Posterior vena cava (tissue), 2 donors: ENCODE measurements at regions of chr9 and their contacts with region 1.

Region 1: GRCh38 chr9:91298311-91298710 is 63.4 kb downstream of the AUH start:
- DNase-seq: no peak

Region 2: DNA sequence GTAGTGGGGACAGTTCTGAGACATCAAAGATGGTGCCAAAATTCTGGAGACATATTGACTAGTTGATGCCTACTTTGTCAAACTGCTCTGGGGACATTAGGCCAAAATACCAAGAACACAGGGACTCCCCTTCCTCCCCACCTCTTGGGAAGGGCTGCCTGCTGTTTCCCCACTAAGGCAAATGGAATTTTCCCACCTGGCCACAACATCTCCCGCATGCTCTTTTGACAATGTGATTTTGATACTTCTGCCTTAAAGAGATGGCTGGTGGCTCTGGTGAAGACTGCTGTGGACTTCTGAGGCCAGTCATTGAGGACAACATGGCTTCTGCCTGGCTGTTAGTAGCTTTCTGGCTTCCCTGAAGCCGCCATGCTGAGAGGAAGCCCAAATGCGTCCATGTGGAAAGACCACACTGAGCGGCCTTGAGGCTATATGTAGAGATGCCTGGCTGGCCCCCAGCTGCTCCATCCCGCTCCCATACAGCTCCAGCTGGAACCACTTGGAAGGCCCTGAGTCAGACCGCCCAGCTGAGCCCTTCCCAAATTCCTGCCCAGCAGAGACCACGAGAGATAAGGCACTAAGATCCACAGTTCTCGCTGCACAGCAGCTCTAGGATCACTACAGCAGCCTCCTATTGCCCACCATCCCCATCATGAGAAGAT is 270.0 kb before region 1 on chr9:
- intact Hi-C with region 1: no loop called
- DNase-seq: no peak

Region 3: DNA sequence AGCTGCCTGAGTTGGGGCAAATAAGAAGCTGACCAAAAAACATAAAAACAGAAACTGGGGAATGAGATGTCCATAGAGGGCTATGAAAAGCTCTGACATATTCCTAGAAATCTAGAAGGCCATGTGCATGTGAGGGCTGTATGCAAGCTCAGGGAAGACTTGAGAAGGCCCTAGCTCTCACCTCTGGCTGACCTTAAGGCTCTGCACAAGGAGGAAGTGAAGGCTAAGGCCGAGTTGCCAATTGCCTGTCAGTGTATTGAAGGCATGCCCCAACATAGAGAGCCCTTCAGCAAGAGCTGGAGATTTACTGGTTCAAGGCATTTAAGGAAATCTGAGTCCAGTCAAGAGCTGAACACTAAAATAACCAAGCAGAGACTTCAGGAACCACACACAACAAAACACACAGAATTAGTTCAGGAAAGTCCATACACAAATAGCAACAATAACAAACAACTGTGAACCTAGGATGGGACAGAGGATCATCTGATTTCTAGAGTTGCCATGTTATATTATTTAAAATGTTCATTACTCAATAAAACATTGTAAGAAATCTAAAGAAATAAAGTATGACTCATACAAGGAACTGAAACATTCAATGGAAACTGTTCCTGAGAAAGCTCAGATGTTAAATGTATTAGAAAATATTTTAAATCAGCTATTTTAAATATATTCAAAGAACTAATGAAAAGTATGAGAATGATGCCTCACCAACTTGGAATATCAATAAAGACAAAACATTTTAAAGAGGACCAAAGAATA is 98.4 kb before region 1 on chr9:
- intact Hi-C with region 1: loop called in 1 of 2 experiments (anchors 5 kb)
- DNase-seq: no peak

Region 4: DNA sequence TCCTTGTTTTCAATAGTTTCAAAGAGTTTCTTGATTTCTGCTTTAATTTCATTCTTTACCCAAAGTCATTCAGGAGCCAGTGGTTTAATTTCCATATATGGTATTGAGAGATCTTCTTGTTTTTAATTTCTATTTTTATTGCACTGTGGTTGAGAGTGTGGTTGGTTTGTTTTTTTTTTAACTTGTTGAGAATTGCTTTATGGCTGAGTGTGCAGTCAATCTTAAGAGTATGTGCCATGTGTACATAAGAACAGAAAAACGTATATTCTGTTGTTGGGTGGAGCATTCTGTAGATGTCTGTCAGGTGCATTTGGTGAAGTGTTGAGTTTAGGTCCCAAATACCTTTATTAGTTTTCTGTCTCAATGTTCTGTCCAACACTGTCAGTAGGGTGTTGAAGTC is 1398.3 kb after region 1 on chr9:
- intact Hi-C with region 1: no loop called
- DNase-seq: no peak